ENCODE measurements at regions of chr17 and their contacts with region 1.

Region 1: DNA sequence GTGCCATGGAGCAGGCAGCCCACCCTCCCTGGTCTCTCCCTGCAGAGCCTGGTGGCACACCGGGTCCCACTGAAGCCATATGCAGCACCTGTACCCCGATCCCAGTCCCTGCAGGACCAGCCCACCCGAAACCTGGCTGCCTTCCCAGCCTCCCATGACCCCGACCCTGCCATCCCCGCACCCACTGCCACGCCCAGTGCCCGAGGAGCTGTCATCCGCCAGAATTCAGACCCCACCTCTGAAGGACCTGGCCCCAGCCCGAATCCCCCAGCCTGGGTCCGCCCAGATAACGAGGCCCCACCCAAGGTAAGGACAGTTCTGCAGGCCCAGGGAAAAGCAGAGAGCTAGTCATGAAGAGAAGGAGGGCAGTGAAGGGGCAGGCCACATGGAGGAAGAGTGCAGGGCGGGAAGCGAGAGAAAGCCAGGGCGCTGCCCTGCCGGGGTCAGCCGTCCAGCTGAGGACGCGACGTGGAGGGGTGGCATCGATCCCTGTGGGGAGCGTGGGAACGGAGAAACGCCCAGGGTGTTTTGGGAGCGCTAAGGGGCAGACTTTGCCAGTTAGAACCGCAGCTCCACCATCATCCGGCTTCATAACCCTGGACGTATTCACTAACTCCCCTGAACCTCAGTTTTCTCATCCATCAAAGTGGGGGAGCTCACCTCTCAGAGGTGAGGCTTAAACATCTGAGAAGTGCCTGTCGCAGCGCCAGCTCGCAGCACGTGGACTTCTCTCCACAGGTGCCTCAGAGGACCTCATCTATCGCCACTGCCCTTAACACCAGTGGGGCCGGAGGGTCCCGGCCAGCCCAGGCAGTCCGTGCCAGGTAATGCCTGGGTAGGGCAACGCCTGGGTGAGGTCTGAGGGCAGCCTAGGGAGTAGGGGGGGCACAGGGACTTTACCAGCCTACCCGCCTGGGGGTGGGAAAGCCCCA is 7.7 kb upstream of the C17orf107 start:
- DNase-seq: no peak
- H3K4me3 ChIP-seq: no peak overlapping the region
- CTCF ChIP-seq: no peak

Region 2: GRCh38 chr17:4709794-4710692 is 181.6 kb before region 1 on chr17 and contains the start of gene ARRB2:
- CTCF ChIA-PET with region 1: interaction called, 38 read pairs
- POLR2A ChIA-PET with region 1: no interaction called
- DNase-seq: peak; percentile 80
- H3K4me3 ChIP-seq: peak within 1 kb of the TSS; percentile 65
- CTCF ChIP-seq: peak; percentile 81

Region 3: GRCh38 chr17:4859816-4860625 is 31.7 kb before region 1 on chr17:
- CTCF ChIA-PET with region 1: interaction called, 10 read pairs
- POLR2A ChIA-PET with region 1: no interaction called
- DNase-seq: no peak
- H3K4me3 ChIP-seq: no peak overlapping the region
- CTCF ChIP-seq: no peak

Region 4: GRCh38 chr17:5184288-5184687 is 292.6 kb after region 1 on chr17:
- CTCF ChIA-PET with region 1: no interaction called
- POLR2A ChIA-PET with region 1: no interaction called
- DNase-seq: no peak
- H3K4me3 ChIP-seq: no peak overlapping the region
- CTCF ChIP-seq: no peak